Endothelial cell of umbilical vein (primary cell): ENCODE measurements at regions of chr1 and their contacts with region 1.

Region 1: DNA sequence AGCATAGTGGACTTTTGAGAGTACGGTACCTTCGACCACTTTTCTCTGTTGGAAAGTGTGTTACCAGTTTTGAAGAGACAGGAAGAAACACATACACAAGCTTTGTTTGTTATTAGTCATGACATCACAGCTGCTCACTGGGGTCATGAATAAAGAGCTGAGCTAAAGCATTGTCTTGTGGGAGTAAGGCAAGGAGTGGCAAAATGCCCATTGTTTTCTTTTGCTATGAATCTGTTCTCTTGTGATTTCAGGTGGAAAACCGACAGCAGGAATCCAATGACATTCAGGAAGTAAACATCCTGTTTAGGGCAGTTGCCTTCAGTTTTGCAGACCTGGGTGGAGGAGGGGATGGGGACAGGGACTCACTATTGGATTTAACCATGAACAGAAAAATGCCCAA is 66.2 kb downstream of the RGL1 start:
- DNase-seq: peak; percentile 93
- H3K4me3 ChIP-seq: peak overlapping the region in 1 of 3 experiments; percentile 15
- H3K27ac ChIP-seq: peak overlapping the region; percentile 99
- H3K4me1 ChIP-seq: peaks cover 63% of the 10 kb centered on the region
- H3K27me3 ChIP-seq: no peaks in the 10 kb centered on the region
- CTCF ChIP-seq: no peak
- POLR2A ChIP-seq: peak; percentile 62

Region 2: DNA sequence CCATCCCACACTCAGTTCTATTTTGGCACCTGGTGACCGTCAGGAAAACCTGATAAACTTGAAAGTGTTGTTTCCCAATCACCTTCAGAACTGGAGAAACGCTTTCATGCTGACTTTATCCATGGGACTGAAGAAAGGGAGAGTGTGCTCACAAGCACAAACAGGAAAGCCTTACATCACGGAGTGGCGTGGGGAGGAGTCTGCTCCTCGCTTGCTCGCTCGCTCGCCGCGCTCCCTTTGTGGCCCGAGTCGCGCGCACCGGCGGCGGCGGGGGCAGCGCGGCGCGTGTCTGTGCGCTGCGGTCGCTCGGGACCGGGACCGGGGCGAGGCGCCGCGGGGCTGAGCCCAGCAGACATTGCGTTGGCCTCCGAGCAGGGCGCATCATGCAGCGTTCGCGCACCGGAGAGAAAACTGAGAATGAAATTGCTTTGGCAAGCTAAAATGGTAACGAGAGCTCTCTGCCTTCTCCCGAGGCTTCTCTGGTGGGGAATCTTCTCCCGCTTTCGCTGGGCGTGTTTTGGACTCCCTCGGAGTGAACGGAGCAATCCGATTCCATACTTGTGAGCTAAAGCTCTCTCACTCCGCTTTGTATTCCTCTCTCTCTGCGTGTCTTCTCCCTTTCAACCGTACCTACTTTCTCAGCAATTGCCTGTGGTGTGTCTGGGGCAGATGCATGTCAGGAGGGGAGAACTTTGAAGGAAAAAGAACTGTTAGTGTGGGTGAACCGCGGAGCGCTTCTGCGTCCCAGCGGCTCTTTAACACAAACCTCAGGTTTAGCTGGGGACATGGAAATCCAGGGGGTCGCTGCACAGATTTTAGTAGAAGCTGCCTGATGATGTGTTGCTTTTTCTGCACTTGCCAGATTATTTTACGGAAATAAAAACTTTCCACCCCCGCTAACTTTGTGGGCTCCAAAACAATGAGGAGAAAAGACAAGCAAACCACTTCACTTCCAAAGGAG is 66.0 kb before region 1 on chr1 and contains the start of gene RGL1:
- CTCF ChIA-PET with region 1: interaction called, 4 read pairs
- POLR2A ChIA-PET with region 1: no interaction called
- dilution Hi-C with region 1: no loop called
- intact Hi-C with region 1: loop called (anchors 1 kb)
- DNase-seq: peak; percentile 89
- H3K4me3 ChIP-seq: peak within 1 kb of the TSS; percentile 51 to 96 (median 89)
- H3K27ac ChIP-seq: peak within 1 kb of the TSS; percentile 88
- H3K4me1 ChIP-seq: peaks cover 25% of the 10 kb centered on the region
- H3K27me3 ChIP-seq: no peaks in the 10 kb centered on the region
- CTCF ChIP-seq: no peak
- POLR2A ChIP-seq: peak; percentile 90
- total RNA-seq, gene RGL1: 35.3 and 38.4 TPM in 2 replicates

Region 3: GRCh38 chr1:183841950-183842794 is 29.0 kb before region 1 on chr1:
- CTCF ChIA-PET with region 1: interaction called, 4 read pairs
- POLR2A ChIA-PET with region 1: no interaction called
- dilution Hi-C with region 1: no loop called
- intact Hi-C with region 1: loop called (anchors 1 kb)
- DNase-seq: peak; percentile 80
- H3K4me3 ChIP-seq: peak overlapping the region in 1 of 3 experiments; percentile 28
- H3K27ac ChIP-seq: peak overlapping the region; percentile 74
- H3K4me1 ChIP-seq: peaks cover 53% of the 10 kb centered on the region
- H3K27me3 ChIP-seq: no peaks in the 10 kb centered on the region
- CTCF ChIP-seq: no peak
- POLR2A ChIP-seq: no peak

Region 4: GRCh38 chr1:183881387-183882131 is 10.4 kb after region 1 on chr1:
- CTCF ChIA-PET with region 1: interaction called, 6 read pairs
- POLR2A ChIA-PET with region 1: no interaction called
- dilution Hi-C with region 1: no loop called
- intact Hi-C with region 1: loop called (anchors 1 kb)
- DNase-seq: peak; percentile 98
- H3K4me3 ChIP-seq: no peak overlapping the region
- H3K27ac ChIP-seq: peak overlapping the region; percentile 77
- H3K4me1 ChIP-seq: peaks cover 43% of the 10 kb centered on the region
- H3K27me3 ChIP-seq: no peaks in the 10 kb centered on the region
- CTCF ChIP-seq: no peak
- POLR2A ChIP-seq: peak; percentile 56

Region 5: DNA sequence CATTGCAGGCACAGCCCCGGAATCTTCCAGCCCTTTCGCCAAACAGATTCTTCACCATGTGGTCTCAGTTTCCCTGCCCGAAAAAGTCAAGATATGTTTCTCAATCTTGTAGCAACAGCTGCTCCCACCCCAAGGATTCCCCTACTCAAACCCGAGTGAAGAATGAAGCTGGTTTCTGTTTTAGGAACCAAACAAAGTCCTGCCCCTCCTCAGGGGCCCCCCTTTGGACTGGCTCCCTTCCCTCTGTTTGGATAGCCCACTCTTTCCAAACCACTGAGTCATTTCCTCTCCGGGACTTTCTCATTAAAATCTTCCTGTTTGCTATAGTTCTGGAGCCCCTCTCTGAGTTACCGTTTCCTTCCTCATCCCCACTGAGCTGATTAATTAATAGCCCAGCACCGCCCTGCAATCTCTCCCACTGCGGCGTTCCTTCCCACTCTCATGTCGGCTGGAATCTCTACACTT is 281.3 kb after region 1 on chr1:
- CTCF ChIA-PET with region 1: no interaction called
- POLR2A ChIA-PET with region 1: no interaction called
- dilution Hi-C with region 1: no loop called
- intact Hi-C with region 1: loop called (anchors 2 kb)
- DNase-seq: peak; percentile 93
- H3K4me3 ChIP-seq: peak overlapping the region; percentile 40 to 81 (median 74)
- H3K27ac ChIP-seq: peak overlapping the region; percentile 79
- H3K4me1 ChIP-seq: peaks cover 29% of the 10 kb centered on the region
- H3K27me3 ChIP-seq: peaks cover 0 to 3% of the 10 kb centered on the region in 2 experiments
- CTCF ChIP-seq: no peak
- POLR2A ChIP-seq: no peak